GM12878 (cell line): ENCODE measurements at regions of chr3 and their contacts with region 1.

Region 1: GRCh38 chr3:105495021-105495420 is 128.3 kb downstream of the ALCAM start:
- DNase-seq: no peak
- ATAC-seq: no peak
- H3K4me3 ChIP-seq: no peak overlapping the region
- H3K27ac ChIP-seq: no peak overlapping the region
- H3K4me1 ChIP-seq: no peaks in the 10 kb centered on the region
- H3K27me3 ChIP-seq: no peaks in the 10 kb centered on the region
- CTCF ChIP-seq: no peak
- EP300 ChIP-seq: no peak
- POLR2A ChIP-seq: no peak
- RAD21 ChIP-seq: no peak

Region 2: GRCh38 chr3:105274958-105275357 is 220.1 kb before region 1 on chr3:
- CTCF ChIA-PET with region 1: no interaction called
- POLR2A ChIA-PET with region 1: no interaction called
- RAD21 ChIA-PET with region 1: no interaction called
- SMC1A ChIA-PET with region 1: no interaction called
- in situ Hi-C with region 1: no loop called
- intact Hi-C with region 1: no loop called
- DNase-seq: no peak
- ATAC-seq: no peak
- H3K4me3 ChIP-seq: no peak overlapping the region
- H3K27ac ChIP-seq: no peak overlapping the region
- H3K4me1 ChIP-seq: no peaks in the 10 kb centered on the region
- H3K27me3 ChIP-seq: no peaks in the 10 kb centered on the region
- CTCF ChIP-seq: no peak
- EP300 ChIP-seq: no peak
- POLR2A ChIP-seq: no peak
- RAD21 ChIP-seq: no peak

Region 3: GRCh38 chr3:105483476-105483875 is 11.5 kb before region 1 on chr3:
- CTCF ChIA-PET with region 1: interaction called, 11 read pairs
- POLR2A ChIA-PET with region 1: no interaction called
- RAD21 ChIA-PET with region 1: no interaction called
- SMC1A ChIA-PET with region 1: interaction called, 6 read pairs
- in situ Hi-C with region 1: no loop called
- intact Hi-C with region 1: no loop called
- DNase-seq: no peak
- ATAC-seq: no peak
- H3K4me3 ChIP-seq: no peak overlapping the region
- H3K27ac ChIP-seq: no peak overlapping the region
- H3K4me1 ChIP-seq: no peaks in the 10 kb centered on the region
- H3K27me3 ChIP-seq: no peaks in the 10 kb centered on the region
- CTCF ChIP-seq: no peak
- EP300 ChIP-seq: no peak
- POLR2A ChIP-seq: no peak
- RAD21 ChIP-seq: no peak

Region 4: DNA sequence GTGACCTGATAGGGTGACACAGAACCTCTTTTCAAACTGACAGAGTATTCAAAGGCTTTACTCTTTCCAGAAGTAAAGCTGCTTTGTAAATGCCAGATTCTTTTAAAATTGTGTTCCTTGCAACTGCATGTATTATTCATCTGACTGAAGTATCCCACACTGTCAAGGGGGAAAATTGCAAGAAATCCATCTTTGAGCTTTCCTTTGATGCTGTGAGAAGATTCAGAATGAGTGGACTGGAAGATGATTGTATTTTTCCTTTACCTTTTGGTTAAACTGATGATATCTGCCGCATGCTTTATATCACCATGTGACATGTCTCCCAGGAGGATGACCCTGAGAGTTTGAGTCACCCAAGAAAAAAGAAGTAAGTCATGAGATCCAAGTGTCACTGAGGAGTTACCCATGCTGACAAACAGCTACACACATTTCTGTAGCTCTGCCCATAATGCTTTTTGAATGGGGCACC is 624.6 kb after region 1 on chr3:
- CTCF ChIA-PET with region 1: no interaction called
- POLR2A ChIA-PET with region 1: no interaction called
- RAD21 ChIA-PET with region 1: no interaction called
- SMC1A ChIA-PET with region 1: no interaction called
- in situ Hi-C with region 1: no loop called
- intact Hi-C with region 1: no loop called
- DNase-seq: no peak
- ATAC-seq: peak; percentile 43
- H3K4me3 ChIP-seq: no peak overlapping the region
- H3K27ac ChIP-seq: no peak overlapping the region
- H3K4me1 ChIP-seq: no peaks in the 10 kb centered on the region
- H3K27me3 ChIP-seq: no peaks in the 10 kb centered on the region
- CTCF ChIP-seq: no peak
- EP300 ChIP-seq: 0 out of 4 replicates have a peak, but pooled peaks of 1 of the 2 experiments have one; percentile 8
- POLR2A ChIP-seq: no peak
- RAD21 ChIP-seq: no peak